ENCODE measurements at regions of chr19 and their contacts with region 1.

Region 1: GRCh38 chr19:41795031-41795461 is 1.3 kb upstream of the CEACAM3 start:
- DNase-seq: peak; percentile 33 to 81 (median 51)
- ATAC-seq: peak; percentile 98
- H3K4me3 ChIP-seq: no peak overlapping the region
- H3K4me3 Mint-ChIP-seq: no peak overlapping the region
- H3K27ac ChIP-seq: no peak overlapping the region
- H3K27ac Mint-ChIP-seq: no peak overlapping the region
- H3K4me1 ChIP-seq: no peaks in the 10 kb centered on the region
- H3K4me1 Mint-ChIP-seq: no peaks in the 10 kb centered on the region
- H3K27me3 ChIP-seq: peaks cover 18 to 19% of the 10 kb centered on the region in 2 experiments
- H3K27me3 Mint-ChIP-seq: peaks cover 34% of the 10 kb centered on the region
- CTCF ChIP-seq: peak; percentile 90

Region 2: GRCh38 chr19:41726493-41726892 is 68.6 kb before region 1 on chr19:
- CTCF ChIA-PET with region 1: no interaction called
- POLR2A ChIA-PET with region 1: no interaction called
- intact Hi-C with region 1: no loop called
- DNase-seq: no peak
- ATAC-seq: no peak
- H3K4me3 ChIP-seq: no peak overlapping the region
- H3K4me3 Mint-ChIP-seq: no peak overlapping the region
- H3K27ac ChIP-seq: no peak overlapping the region
- H3K27ac Mint-ChIP-seq: no peak overlapping the region
- H3K4me1 ChIP-seq: no peaks in the 10 kb centered on the region
- H3K4me1 Mint-ChIP-seq: no peaks in the 10 kb centered on the region
- H3K27me3 ChIP-seq: peaks cover 1 to 19% of the 10 kb centered on the region in 2 experiments
- H3K27me3 Mint-ChIP-seq: peaks cover 60% of the 10 kb centered on the region
- CTCF ChIP-seq: no peak

Region 3: DNA sequence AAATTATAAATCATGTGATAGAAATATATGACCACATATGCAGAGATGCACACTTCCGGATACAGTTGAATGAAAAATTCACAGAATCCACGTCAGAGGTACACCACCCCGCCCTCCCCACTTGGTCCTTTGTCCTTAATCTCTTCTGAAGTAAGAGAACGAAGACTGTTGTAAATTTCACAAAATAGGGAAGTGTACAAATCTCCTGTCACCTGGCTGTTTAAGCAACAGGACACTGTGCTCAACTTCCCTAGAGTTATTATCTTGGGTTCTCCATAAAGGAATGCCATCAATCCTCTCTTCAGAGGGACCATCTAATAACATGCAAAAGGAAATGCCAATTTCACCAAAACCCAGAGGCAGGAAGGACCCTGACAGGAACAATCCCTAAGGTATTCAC is 50.2 kb before region 1 on chr19:
- CTCF ChIA-PET with region 1: no interaction called
- POLR2A ChIA-PET with region 1: no interaction called
- intact Hi-C with region 1: no loop called
- DNase-seq: peak in 1 of 14 experiments; percentile 11
- ATAC-seq: no peak
- H3K4me3 ChIP-seq: no peak overlapping the region
- H3K4me3 Mint-ChIP-seq: no peak overlapping the region
- H3K27ac ChIP-seq: no peak overlapping the region
- H3K27ac Mint-ChIP-seq: no peak overlapping the region
- H3K4me1 ChIP-seq: no peaks in the 10 kb centered on the region
- H3K4me1 Mint-ChIP-seq: peaks cover 11% of the 10 kb centered on the region
- H3K27me3 ChIP-seq: peaks cover 22 to 32% of the 10 kb centered on the region in 2 experiments
- H3K27me3 Mint-ChIP-seq: peaks cover 80% of the 10 kb centered on the region
- CTCF ChIP-seq: no peak

Region 4: GRCh38 chr19:41821003-41821735 is 26.1 kb after region 1 on chr19:
- CTCF ChIA-PET with region 1: interaction called, 22 read pairs
- POLR2A ChIA-PET with region 1: interaction called, 6 read pairs
- intact Hi-C with region 1: loop called (anchors 1 to 2 kb)
- DNase-seq: peak in 13 of 14 experiments; percentile 7 to 76 (median 21)
- ATAC-seq: peak; percentile 81
- H3K4me3 ChIP-seq: no peak overlapping the region
- H3K4me3 Mint-ChIP-seq: no peak overlapping the region
- H3K27ac ChIP-seq: no peak overlapping the region
- H3K27ac Mint-ChIP-seq: no peak overlapping the region
- H3K4me1 ChIP-seq: peaks cover 2% of the 10 kb centered on the region
- H3K4me1 Mint-ChIP-seq: no peaks in the 10 kb centered on the region
- H3K27me3 ChIP-seq: peaks cover 0 to 2% of the 10 kb centered on the region in 2 experiments
- H3K27me3 Mint-ChIP-seq: peaks cover 25% of the 10 kb centered on the region
- CTCF ChIP-seq: peak; percentile 66

Region 5: DNA sequence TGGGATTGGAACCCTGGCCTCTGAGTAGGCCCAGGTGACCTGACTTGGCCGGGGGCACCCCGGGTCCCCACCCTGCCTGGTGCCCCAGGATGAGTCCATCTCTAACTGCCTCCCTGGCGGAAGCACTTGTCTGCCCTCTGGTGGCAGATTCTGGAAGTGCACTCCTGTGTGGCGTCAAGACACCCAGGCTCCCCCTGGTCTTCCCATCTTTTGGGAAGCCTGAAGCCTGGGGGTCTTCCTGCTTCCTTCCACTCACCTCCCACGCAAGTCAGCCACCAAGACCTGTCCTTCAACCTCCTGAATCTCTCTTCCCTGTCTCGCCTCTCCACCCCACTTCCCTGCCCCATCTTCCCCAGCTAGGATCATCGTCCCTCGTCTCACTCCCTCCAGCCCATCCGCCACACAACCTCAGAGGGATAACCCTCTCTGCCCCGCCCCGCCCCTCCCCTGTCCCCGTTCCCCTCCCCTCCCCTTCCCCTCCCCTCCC is 156.7 kb after region 1 on chr19:
- CTCF ChIA-PET with region 1: interaction called, 3 read pairs
- POLR2A ChIA-PET with region 1: no interaction called
- intact Hi-C with region 1: loop called (anchors 2 to 5 kb)
- DNase-seq: peak; percentile 76 to 95 (median 88)
- ATAC-seq: peak; percentile 95
- H3K4me3 ChIP-seq: no peak overlapping the region
- H3K4me3 Mint-ChIP-seq: peak overlapping the region; percentile 61
- H3K27ac ChIP-seq: no peak overlapping the region
- H3K27ac Mint-ChIP-seq: peak overlapping the region; percentile 48
- H3K4me1 ChIP-seq: peaks cover 15% of the 10 kb centered on the region
- H3K4me1 Mint-ChIP-seq: peaks cover 20% of the 10 kb centered on the region
- H3K27me3 ChIP-seq: no peaks in the 10 kb centered on the region
- H3K27me3 Mint-ChIP-seq: no peaks in the 10 kb centered on the region
- CTCF ChIP-seq: peak; percentile 99